ENCODE measurements at regions of chr1 and their contacts with region 1.

Region 1: GRCh38 chr1:156282479-156283222 is at the start of gene SMG5:
- DNase-seq: peak; percentile 90
- ATAC-seq: peak; percentile 96
- H3K4me3 ChIP-seq: peak within 1 kb of the TSS; percentile 75 to 92
- H3K27ac ChIP-seq: peak within 1 kb of the TSS; percentile 98
- H3K4me1 ChIP-seq: peaks cover 14% of the 10 kb centered on the region
- H3K27me3 ChIP-seq: no peaks in the 10 kb centered on the region
- CTCF ChIP-seq: no peak
- total RNA-seq, gene SMG5: 117 TPM

Region 2: DNA sequence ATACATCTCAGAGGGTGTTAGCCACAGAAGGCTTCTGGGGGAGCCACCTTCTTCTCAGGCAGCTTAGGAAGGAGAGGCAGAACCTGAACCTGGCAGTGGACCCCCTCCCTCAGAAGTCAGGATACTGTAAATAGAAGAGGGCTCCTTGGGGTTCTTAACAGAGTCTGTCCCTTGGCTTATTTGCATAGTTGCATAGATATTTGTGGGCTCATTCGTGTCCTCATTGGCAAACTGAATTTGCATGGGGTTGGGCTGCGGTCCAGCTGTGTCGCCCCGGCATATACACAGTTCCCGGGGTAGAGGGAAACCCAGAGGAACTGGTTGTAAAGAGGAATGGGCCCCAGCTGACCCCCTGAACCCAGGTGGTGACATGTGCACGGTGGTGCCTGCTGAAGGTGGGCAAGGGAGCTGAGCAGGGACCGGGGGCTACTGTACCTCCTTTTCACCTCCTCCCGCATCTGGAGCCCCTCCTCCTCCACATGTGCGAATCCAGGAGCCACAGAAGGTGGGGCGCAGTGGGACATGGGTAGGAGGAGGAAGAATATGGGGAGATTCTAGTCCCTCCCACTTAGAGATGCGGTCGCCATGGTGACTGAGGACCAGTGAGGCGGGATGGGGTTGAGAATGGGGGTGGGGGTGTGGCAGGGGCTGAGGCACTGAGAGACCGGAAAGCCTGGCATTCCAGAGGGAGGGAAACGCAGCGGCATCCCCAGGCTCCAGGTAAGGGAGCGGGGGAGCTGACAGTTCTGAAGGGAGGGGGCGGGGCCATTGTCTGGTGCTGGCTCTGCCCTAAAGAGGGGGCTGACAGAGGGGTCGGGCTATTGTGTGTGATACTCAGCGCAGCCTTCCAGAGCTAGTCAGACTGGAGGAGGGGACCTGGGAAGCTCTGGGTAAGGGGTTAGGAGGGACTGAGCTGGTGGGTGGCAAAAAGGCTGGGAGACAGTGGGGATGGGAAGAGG is 133.0 kb before region 1 on chr1:
- CTCF ChIA-PET with region 1: no interaction called
- POLR2A ChIA-PET with region 1: no interaction called
- in situ Hi-C with region 1: no loop called
- intact Hi-C with region 1: no loop called
- DNase-seq: no peak
- ATAC-seq: no peak
- H3K4me3 ChIP-seq: no peak overlapping the region
- H3K27ac ChIP-seq: no peak overlapping the region
- H3K4me1 ChIP-seq: peaks cover 16% of the 10 kb centered on the region
- H3K27me3 ChIP-seq: no peaks in the 10 kb centered on the region
- CTCF ChIP-seq: no peak

Region 3: GRCh38 chr1:156160743-156161171 is 121.9 kb before region 1 on chr1:
- CTCF ChIA-PET with region 1: no interaction called
- POLR2A ChIA-PET with region 1: no interaction called
- in situ Hi-C with region 1: no loop called
- intact Hi-C with region 1: no loop called
- DNase-seq: no peak
- ATAC-seq: no peak
- H3K4me3 ChIP-seq: no peak overlapping the region
- H3K27ac ChIP-seq: no peak overlapping the region
- H3K4me1 ChIP-seq: no peaks in the 10 kb centered on the region; the same call in 1 of the 2 replicates
- H3K27me3 ChIP-seq: no peaks in the 10 kb centered on the region
- CTCF ChIP-seq: no peak

Region 4: DNA sequence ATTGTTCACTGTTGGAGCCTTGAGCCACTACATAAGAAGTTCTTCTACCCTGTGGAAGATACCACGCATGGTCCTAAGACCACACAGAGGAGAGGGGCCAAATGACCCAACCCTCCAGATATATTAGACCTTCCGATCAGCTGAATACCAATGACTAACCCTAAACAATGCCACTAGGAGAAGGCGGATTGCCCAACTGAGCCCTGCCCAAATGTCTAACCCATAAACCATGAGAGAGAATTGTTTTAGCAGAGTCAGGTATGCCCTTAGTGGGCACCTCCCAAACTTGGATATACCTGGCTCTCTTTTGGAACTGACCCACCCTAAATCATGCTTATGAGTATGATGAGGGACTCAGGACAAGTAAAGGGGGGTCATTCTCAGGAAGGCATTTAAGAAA is 12.3 kb before region 1 on chr1:
- CTCF ChIA-PET with region 1: no interaction called
- POLR2A ChIA-PET with region 1: interaction called, 12 read pairs
- in situ Hi-C with region 1: no loop called
- intact Hi-C with region 1: no loop called
- DNase-seq: no peak
- ATAC-seq: no peak
- H3K4me3 ChIP-seq: no peak overlapping the region
- H3K27ac ChIP-seq: no peak overlapping the region
- H3K4me1 ChIP-seq: no peaks in the 10 kb centered on the region
- H3K27me3 ChIP-seq: no peaks in the 10 kb centered on the region
- CTCF ChIP-seq: no peak

Region 5: GRCh38 chr1:156295391-156295947 is 12.8 kb after region 1 on chr1 and contains the start of gene GLMP:
- CTCF ChIA-PET with region 1: no interaction called
- POLR2A ChIA-PET with region 1: no interaction called
- in situ Hi-C with region 1: no loop called
- intact Hi-C with region 1: no loop called
- DNase-seq: no peak
- ATAC-seq: 0 out of 2 replicates have a peak, but pooled peaks have one; percentile 23
- H3K4me3 ChIP-seq: peak within 1 kb of the TSS; percentile 57 to 86
- H3K27ac ChIP-seq: peak within 1 kb of the TSS; percentile 87
- H3K4me1 ChIP-seq: peaks cover 18% of the 10 kb centered on the region
- H3K27me3 ChIP-seq: no peaks in the 10 kb centered on the region
- CTCF ChIP-seq: no peak
- total RNA-seq, gene GLMP: 60.2 TPM

Measured in Panc1 (cell line).